Lower leg skin (tissue), 4 donors: ENCODE measurements at regions of chr12 and their contacts with region 1.

Region 1: DNA sequence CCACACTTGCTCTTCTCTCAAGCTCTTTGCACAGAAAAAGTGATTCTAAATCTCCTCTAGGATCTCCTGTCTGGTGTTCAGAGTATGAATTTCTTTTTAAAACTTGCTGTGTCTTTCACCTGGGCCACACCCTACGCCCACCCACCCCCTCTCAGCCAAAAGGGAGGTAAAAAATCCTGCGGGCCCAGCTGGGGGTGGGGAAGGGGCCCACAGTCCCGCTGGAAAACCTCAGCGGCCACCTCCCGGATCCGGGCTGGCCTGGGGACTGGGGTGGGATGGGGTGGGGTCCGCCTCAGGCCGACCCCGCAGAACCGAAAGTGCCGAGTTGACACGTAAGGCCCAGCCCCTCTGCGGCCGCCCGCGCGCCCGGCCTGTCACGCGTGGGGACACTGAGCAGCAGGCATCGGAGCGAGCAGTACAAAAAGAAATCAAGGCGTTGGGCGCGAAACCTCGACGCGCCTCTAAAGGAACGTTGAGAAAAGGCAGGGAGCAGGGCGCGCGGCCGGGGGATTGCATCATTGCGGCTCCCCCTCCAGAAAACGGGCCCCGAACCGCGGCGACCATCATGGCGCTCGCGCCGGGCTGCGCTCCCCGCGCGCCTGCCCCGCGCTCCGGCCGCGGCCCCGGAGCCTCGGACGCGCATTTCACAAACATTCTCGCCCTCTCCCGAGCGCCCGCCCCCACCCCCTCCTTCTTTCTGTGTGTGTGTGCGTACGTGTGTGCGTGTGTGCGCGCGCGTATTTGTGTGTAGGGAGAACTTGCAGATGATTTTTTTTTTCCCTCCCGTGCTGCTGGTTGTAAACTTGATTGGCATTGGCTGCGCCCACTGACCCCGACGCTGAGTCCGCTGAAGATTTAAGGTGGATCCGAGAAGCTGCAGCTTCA is 7.7 kb downstream of the CDKN1B start:
- DNase-seq: peak; percentile 93 to 98
- H3K4me3 ChIP-seq: peak overlapping the region; percentile 67
- CTCF ChIP-seq: no peak
- POLR2A ChIP-seq: peak in 1 of 2 donors; percentile 5

Region 2: DNA sequence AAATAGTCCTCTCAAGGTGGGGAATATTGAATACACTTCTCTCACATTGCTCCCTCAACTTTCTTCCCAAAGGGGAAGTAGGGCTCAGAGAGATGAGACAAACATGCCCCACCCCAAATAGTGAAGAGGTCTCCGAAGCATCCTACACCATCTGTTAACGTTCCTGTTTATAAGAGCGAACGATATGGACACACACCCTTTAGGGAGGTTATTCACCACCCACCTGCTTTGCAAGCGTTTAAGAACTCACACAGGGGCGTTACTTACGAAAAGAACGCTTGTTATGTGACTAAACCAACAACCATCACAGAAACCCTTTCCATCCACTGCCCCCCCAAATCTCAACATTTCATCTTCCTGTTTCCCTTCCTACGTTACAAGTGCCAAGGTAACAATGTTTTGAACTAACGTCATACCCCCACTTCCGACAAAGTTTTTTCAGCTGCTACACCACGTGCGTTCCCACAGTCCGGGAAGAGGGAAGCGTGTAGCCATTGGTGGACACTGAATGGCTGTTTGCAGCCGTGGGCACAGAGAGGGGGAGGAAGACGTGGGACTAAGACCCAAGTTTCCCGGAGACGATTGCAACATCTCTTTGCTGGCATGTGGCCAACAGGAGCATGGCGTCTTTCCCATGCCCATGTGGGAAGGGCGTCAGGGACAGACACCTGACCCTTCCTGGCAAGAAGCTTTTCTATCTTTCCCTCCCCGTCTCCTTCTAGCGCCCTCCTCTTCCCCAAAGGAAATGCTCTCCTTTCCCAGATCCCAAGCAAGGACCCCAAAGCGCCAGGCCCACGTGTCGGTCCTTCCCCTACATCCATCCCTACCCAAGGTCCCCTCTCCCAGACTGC is 2003.0 kb before region 1 on chr12:
- intact Hi-C with region 1: loop called (anchors 10 kb)
- DNase-seq: peak; percentile 96 to 99
- H3K4me3 ChIP-seq: peak overlapping the region; percentile 97
- CTCF ChIP-seq: no peak
- POLR2A ChIP-seq: no peak

Region 3: GRCh38 chr12:12425616-12426015 is 299.3 kb before region 1 on chr12:
- intact Hi-C with region 1: no loop called
- DNase-seq: no peak
- H3K4me3 ChIP-seq: no peak overlapping the region
- CTCF ChIP-seq: no peak
- POLR2A ChIP-seq: no peak

Region 4: GRCh38 chr12:12491606-12492005 is 233.3 kb before region 1 on chr12:
- intact Hi-C with region 1: no loop called
- DNase-seq: no peak
- H3K4me3 ChIP-seq: no peak overlapping the region
- CTCF ChIP-seq: no peak
- POLR2A ChIP-seq: no peak

Region 5: GRCh38 chr12:12749433-12749832 is 24.5 kb after region 1 on chr12:
- intact Hi-C with region 1: no loop called
- DNase-seq: no peak
- H3K4me3 ChIP-seq: no peak overlapping the region
- CTCF ChIP-seq: no peak
- POLR2A ChIP-seq: no peak